Activated CD4-positive, alpha-beta T cell treated with anti-CD3 and anti-CD28 coated beads, Interleukin-2, amount 10 ng/mL, durations not matched to agents 7 days and 5 days (primary cell): ENCODE measurements at regions of chr5 and their contacts with region 1.

Region 1: DNA sequence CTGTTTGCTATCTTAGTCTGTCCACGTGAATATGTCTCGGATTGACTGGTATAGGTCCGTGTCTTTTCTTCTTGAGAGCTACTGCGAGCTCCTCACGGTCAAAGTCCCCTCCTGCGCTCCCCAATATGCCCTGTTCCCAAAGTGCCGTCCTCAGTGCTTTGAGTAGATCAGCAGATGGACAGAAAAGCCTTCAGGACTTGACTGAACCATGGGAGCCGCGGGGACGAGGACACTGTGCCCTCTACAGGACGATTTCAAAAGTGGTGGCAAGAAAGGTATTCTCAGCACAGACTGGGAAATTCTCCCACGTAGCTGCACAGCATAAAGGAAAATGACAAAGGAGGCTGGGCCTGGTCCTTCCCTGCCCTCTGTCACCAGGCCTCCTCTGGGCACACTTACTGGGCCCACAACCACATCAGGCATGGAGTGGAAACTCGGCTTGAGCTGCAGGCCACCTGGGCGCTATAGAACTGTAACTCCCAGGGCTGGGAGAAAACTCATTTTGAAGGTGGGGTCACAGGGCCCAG is 16.6 kb upstream of the MTMR12 start:
- DNase-seq: peak; percentile 61
- H3K4me3 Mint-ChIP-seq: no peak overlapping the region
- H3K27ac Mint-ChIP-seq: no peak overlapping the region
- H3K4me1 Mint-ChIP-seq: peaks cover 5% of the 10 kb centered on the region
- H3K27me3 Mint-ChIP-seq: no peaks in the 10 kb centered on the region

Region 2: GRCh38 chr5:32232441-32233219 is 96.7 kb before region 1 on chr5:
- CTCF ChIA-PET with region 1: interaction called, 47 read pairs
- POLR2A ChIA-PET with region 1: interaction called, 3 read pairs
- DNase-seq: peak; percentile 80
- H3K4me3 Mint-ChIP-seq: no peak overlapping the region
- H3K27ac Mint-ChIP-seq: no peak overlapping the region
- H3K4me1 Mint-ChIP-seq: peaks cover 6% of the 10 kb centered on the region
- H3K27me3 Mint-ChIP-seq: no peaks in the 10 kb centered on the region

Region 3: GRCh38 chr5:32342656-32343055 is 13.3 kb after region 1 on chr5:
- CTCF ChIA-PET with region 1: interaction called, 14 read pairs
- POLR2A ChIA-PET with region 1: no interaction called
- DNase-seq: no peak
- H3K4me3 Mint-ChIP-seq: no peak overlapping the region
- H3K27ac Mint-ChIP-seq: no peak overlapping the region
- H3K4me1 Mint-ChIP-seq: no peaks in the 10 kb centered on the region
- H3K27me3 Mint-ChIP-seq: peaks cover 2% of the 10 kb centered on the region